GM12878 (cell line): ENCODE measurements at regions of chr1 and their contacts with region 1.

Region 1: GRCh38 chr1:15272009-15272788 is 25.2 kb downstream of the FHAD1 start:
- DNase-seq: no peak
- ATAC-seq: peak; percentile 96
- H3K4me3 ChIP-seq: no peak overlapping the region
- H3K27ac ChIP-seq: no peak overlapping the region
- H3K4me1 ChIP-seq: no peaks in the 10 kb centered on the region
- H3K27me3 ChIP-seq: no peaks in the 10 kb centered on the region
- CTCF ChIP-seq: peak; percentile 75 to 89 (median 83)
- EP300 ChIP-seq: no peak
- POLR2A ChIP-seq: no peak
- RAD21 ChIP-seq: peak; percentile 97

Region 2: GRCh38 chr1:15168479-15168878 is 103.7 kb before region 1 on chr1:
- CTCF ChIA-PET with region 1: interaction called, 12 read pairs
- POLR2A ChIA-PET with region 1: no interaction called
- RAD21 ChIA-PET with region 1: interaction called, 13 read pairs
- SMC1A ChIA-PET with region 1: interaction called, 6 read pairs
- in situ Hi-C with region 1: no loop called
- intact Hi-C with region 1: no loop called
- DNase-seq: peak; percentile 63
- ATAC-seq: peak; percentile 82
- H3K4me3 ChIP-seq: no peak overlapping the region
- H3K27ac ChIP-seq: peak overlapping the region; percentile 47
- H3K4me1 ChIP-seq: peaks cover 13% of the 10 kb centered on the region
- H3K27me3 ChIP-seq: no peaks in the 10 kb centered on the region
- CTCF ChIP-seq: no peak
- EP300 ChIP-seq: no peak
- POLR2A ChIP-seq: no peak
- RAD21 ChIP-seq: no peak

Region 3: GRCh38 chr1:15231714-15232201 is 40.4 kb before region 1 on chr1:
- CTCF ChIA-PET with region 1: interaction called, 5 read pairs
- POLR2A ChIA-PET with region 1: no interaction called
- RAD21 ChIA-PET with region 1: interaction called, 19 read pairs
- SMC1A ChIA-PET with region 1: interaction called, 24 read pairs
- in situ Hi-C with region 1: no loop called
- intact Hi-C with region 1: no loop called
- DNase-seq: peak; percentile 95
- ATAC-seq: peak; percentile 100
- H3K4me3 ChIP-seq: no peak overlapping the region
- H3K27ac ChIP-seq: peak overlapping the region; percentile 41; the same call in 1 of the 2 replicates
- H3K4me1 ChIP-seq: peaks cover 12% of the 10 kb centered on the region
- H3K27me3 ChIP-seq: no peaks in the 10 kb centered on the region
- CTCF ChIP-seq: no peak
- EP300 ChIP-seq: peak; percentile 20 to 62; a peak in 2 of 4 replicates
- POLR2A ChIP-seq: no peak
- RAD21 ChIP-seq: no peak

Region 4: DNA sequence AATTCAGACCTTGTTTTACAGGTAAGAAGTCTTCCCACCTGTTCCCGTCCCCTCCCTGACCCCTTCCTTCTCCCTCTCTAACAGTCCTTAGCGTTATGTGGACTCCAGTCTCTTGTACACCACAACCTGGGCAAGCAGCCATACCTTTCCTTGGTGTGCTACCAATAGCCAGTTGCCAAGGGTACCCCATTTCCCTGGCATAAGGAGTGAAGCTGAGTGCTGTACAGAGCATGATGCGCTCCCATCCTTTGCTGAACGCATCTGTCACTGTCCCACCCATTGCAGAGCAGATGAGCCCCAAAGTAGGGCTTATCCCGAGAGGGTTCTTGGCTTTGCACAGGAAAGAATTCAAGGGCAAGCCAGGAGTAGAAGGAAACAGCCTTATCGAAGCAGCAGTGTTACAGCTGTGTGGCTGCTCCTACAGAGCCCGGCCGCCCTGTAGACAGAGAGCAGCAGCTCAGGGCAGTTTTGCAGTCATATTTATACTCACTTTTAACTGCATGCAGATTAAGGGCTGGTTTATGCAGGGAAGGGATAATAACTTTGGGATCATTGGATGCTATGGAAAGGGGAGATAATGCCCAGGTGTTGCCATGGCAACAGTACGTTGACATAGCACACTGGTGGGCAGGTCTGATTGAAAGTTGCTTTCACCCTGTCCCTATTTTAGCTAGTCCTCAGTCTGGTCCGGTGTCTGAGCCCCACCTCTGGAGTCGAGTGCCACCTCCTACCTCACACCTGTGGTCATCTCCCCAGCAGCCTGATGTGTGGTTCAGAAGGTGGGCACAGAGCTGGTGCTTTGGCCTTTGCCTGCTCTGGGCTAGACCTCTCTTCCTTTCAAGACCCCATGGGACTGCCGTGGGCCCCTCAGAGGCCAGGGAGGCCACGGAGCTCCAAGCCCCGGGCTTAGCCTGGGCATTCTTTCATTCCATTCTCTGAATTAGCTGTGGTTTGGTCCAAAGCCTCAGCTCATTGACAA is 20.1 kb before region 1 on chr1:
- CTCF ChIA-PET with region 1: interaction called, 20 read pairs
- POLR2A ChIA-PET with region 1: interaction called, 3 read pairs
- RAD21 ChIA-PET with region 1: interaction called, 18 read pairs
- SMC1A ChIA-PET with region 1: interaction called, 14 read pairs
- in situ Hi-C with region 1: no loop called
- intact Hi-C with region 1: no loop called
- DNase-seq: no peak
- ATAC-seq: peak; percentile 38
- H3K4me3 ChIP-seq: no peak overlapping the region
- H3K27ac ChIP-seq: peak overlapping the region; percentile 48
- H3K4me1 ChIP-seq: peaks cover 27% of the 10 kb centered on the region
- H3K27me3 ChIP-seq: no peaks in the 10 kb centered on the region
- CTCF ChIP-seq: no peak
- EP300 ChIP-seq: no peak
- POLR2A ChIP-seq: no peak
- RAD21 ChIP-seq: no peak

Region 5: DNA sequence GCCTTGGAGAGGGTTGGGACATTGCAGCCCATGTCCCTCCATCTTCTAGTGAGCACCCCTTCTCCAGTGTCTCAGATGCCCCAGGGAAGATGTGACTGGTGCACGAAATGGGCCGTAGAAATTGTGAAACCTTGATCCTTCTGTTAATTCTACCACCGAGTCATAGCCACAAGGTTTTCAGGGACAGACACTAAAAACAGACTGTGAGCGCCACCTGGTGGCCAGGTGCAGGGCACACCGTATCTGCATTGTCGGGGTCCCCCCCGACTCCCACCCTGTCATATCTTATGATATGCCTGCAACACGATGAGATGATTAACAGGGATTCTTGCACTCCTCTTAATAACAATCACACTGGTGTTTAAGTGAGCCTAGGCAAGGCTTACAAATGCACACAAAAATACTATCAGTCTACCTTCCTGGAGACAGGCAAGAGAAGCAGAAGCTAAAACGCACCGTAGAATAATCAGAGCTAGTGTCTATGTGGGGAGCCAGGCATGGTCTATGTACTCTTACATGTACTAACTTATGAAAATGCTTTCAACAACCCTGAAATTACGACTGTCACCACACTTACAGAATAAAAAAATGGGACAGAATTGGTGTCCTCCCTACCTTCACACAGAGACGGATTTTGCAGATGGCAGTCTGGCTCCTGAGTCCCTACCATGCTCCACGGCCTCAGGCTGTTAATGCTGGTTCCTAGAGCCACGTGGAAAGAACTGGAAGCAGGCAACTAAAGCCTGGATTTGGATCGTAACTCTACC is 32.7 kb after region 1 on chr1:
- CTCF ChIA-PET with region 1: interaction called, 10 read pairs
- POLR2A ChIA-PET with region 1: no interaction called
- RAD21 ChIA-PET with region 1: interaction called, 3 read pairs
- SMC1A ChIA-PET with region 1: interaction called, 22 read pairs
- in situ Hi-C with region 1: no loop called
- intact Hi-C with region 1: no loop called
- DNase-seq: no peak
- ATAC-seq: peak; percentile 85
- H3K4me3 ChIP-seq: no peak overlapping the region
- H3K27ac ChIP-seq: no peak overlapping the region
- H3K4me1 ChIP-seq: no peaks in the 10 kb centered on the region
- H3K27me3 ChIP-seq: no peaks in the 10 kb centered on the region; a peak in 1 of 4 replicates
- CTCF ChIP-seq: peak; percentile 87 to 92 (median 88)
- EP300 ChIP-seq: no peak
- POLR2A ChIP-seq: no peak
- RAD21 ChIP-seq: peak; percentile 84